ENCODE measurements at regions of chr10 and their contacts with region 1.

Region 1: DNA sequence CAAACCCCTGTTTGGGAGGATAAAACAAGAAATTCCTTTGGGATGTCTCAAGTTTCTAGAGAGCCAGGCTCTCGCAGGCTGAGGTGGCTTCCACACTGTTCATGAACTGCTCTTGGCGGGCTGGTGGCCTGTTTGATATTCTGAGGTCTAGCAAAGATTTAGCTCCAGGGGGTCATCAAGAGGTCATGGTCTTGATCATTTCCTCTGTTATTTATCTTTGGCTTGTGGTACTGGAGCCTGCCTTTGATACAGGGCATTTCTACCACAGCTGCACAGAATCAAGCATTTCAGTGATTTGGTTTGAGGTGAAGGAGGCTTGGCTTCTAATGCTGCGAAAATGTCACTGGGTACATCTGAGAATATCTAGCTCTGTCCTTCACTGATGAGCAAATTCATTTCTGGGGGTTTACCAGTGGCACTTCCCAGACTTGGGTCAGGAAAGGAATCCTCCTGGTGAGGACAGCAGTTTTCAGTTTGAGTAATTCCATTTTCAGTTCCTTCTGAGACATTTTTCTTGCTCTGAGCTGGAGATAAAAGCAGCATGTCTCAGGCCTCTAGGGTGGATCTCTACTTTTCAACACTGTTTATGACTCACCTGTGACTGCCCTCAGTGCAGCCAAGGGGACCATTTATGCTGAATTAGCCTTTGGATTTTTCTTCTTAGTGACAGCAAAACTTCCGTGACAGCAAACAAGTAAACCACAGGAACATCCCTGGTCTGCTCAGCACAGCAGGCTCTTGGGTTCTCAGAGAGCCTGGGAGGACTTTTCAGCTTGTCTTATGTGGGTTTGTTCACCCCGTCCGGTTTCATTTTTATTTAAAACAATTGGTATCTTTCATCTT is 312.0 kb downstream of the RNLS start:
- DNase-seq: peak; percentile 66 to 79 (median 71)
- H3K4me3 ChIP-seq: peak overlapping the region; percentile 3 to 6
- H3K4me3 Mint-ChIP-seq: peak overlapping the region; percentile 76 to 81 (median 78)
- H3K27ac ChIP-seq: peak overlapping the region; percentile 32
- H3K27ac Mint-ChIP-seq: peak overlapping the region; percentile 87 to 93 (median 92)
- H3K4me1 ChIP-seq: peaks cover 57% of the 10 kb centered on the region
- H3K4me1 Mint-ChIP-seq: peaks cover 33 to 54% (median 43%) of the 10 kb centered on the region in 4 donors
- H3K27me3 ChIP-seq: no peaks in the 10 kb centered on the region
- H3K27me3 Mint-ChIP-seq: no peaks in the 10 kb centered on the region

Region 2: GRCh38 chr10:88194041-88194887 is 76.8 kb before region 1 on chr10:
- CTCF ChIA-PET with region 1: no interaction called
- POLR2A ChIA-PET with region 1: interaction called, 5 read pairs
- intact Hi-C with region 1: loop called (anchors 5 kb)
- DNase-seq: peak; percentile 64 to 80 (median 77)
- H3K4me3 ChIP-seq: peak overlapping the region in 1 of 2 donors; percentile 8
- H3K4me3 Mint-ChIP-seq: peak overlapping the region; percentile 8 to 84 (median 78)
- H3K27ac ChIP-seq: no peak overlapping the region
- H3K27ac Mint-ChIP-seq: peak overlapping the region; percentile 76 to 95 (median 89)
- H3K4me1 ChIP-seq: peaks cover 40% of the 10 kb centered on the region
- H3K4me1 Mint-ChIP-seq: peaks cover 32 to 54% (median 43%) of the 10 kb centered on the region in 4 donors
- H3K27me3 ChIP-seq: no peaks in the 10 kb centered on the region
- H3K27me3 Mint-ChIP-seq: no peaks in the 10 kb centered on the region